ENCODE measurements at regions of chr20 and their contacts with region 1.

Region 1: GRCh38 chr20:3767427-3768341 is at the start of gene ADISSP:
- DNase-seq: peak; percentile 100
- H3K27ac ChIP-seq: peak within 1 kb of the TSS; percentile 90
- CTCF ChIP-seq: no peak

Region 2: DNA sequence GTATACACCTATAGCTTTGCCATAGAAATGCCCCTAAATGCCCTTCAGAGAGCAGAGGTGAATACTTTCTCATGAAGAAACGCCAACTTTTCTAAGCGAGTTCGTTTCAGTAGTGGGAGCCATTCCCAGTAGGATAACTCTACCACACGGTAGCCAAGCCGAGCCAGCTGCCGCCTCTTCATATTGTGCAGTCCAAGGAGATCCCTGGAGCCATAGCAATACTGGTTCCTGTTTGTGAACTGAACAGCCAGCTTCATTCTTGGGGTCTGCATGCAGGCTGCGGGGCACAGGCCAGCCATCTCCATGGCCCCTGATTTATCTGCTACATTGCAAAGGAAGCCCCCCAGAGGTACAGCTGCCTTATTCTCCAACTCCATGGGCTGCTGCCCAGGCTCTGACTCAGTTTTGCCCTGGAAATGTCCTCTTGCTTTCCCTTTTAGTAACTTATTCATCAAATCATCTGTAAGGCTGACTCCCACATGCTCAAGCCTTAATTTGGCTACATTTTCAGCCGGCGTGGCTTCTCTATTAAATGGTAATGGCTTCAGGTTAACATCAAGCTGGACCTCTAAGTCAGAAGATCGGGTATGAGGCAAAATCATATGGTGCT is 620.8 kb before region 1 on chr20:
- CTCF ChIA-PET with region 1: no interaction called
- POLR2A ChIA-PET with region 1: no interaction called
- DNase-seq: no peak
- H3K27ac ChIP-seq: no peak overlapping the region
- CTCF ChIP-seq: no peak

Region 3: GRCh38 chr20:3663031-3663701 is 104.5 kb before region 1 on chr20 and contains the start of gene GFRA4:
- CTCF ChIA-PET with region 1: no interaction called
- POLR2A ChIA-PET with region 1: interaction called, 13 read pairs
- DNase-seq: no peak
- H3K27ac ChIP-seq: no peak within 1 kb of the TSS
- CTCF ChIP-seq: no peak

Region 4: DNA sequence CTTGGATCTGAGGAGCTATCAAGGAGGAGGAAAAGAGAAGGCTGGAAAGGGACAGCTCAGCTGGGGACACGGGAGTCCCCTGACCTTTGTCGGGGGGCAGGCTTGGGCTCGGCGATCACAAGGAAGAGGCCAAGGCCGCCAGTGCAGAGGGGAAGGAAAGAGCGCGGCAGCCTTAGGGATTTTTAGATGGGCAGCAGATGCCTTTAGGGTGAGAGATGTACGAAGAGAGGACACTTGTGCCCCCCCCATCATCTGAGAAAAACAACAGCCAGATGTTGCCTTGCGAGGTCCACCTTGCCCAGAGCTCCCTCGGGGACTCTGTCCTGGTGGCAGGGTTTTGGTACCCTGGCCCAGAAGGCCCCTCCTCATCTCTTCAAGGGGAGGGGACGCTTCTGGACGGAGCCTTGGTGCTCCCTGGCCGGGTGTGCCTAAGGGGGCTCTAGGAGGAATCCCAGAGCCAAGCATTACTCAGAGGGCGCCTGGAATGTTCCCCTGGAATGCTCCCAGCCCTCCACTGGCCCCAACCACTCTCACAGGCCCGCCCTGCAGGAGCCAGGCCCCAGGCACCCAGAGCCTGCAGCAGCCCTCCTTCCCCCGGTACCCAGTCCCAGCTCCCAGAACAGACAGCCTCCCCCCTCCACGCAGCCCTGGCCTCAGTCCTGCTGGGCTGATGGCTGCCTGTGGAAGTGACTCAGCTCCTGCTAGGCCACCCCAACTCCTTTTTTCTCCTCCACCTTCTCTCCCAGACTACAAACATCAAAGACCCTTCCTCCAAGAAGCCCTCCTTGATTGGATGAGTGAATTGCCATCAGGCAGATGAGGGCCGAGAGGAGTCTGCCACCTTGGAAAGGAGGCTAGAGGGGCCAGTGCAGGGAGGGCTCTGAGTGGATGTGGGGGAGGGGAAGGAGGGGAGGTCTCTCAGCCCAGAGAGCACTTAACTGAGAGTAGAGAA is 87.7 kb before region 1 on chr20:
- CTCF ChIA-PET with region 1: interaction called, 10 read pairs
- POLR2A ChIA-PET with region 1: no interaction called
- DNase-seq: no peak
- H3K27ac ChIP-seq: peak overlapping the region; percentile 14; the same call in 1 of the 2 replicates
- CTCF ChIP-seq: no peak

Region 5: DNA sequence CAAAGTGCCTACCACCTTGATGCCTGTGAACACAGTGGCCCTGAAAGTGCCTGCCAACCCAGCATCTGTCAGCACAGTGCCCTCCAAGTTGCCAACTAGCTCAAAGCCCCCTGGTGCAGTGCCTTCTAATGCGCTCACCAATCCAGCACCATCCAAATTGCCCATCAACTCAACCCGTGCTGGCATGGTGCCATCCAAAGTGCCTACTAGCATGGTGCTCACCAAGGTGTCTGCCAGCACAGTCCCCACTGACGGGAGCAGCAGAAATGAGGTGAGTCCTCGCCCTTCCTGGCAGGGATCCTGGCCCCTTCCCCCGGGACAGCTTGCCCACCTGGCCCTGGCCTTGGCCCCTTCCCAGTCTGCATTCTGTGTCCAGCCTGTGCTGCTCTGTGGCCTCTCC is 96.8 kb after region 1 on chr20:
- CTCF ChIA-PET with region 1: no interaction called
- POLR2A ChIA-PET with region 1: no interaction called
- DNase-seq: no peak
- H3K27ac ChIP-seq: peak overlapping the region; percentile 54
- CTCF ChIP-seq: no peak

Region 6: DNA sequence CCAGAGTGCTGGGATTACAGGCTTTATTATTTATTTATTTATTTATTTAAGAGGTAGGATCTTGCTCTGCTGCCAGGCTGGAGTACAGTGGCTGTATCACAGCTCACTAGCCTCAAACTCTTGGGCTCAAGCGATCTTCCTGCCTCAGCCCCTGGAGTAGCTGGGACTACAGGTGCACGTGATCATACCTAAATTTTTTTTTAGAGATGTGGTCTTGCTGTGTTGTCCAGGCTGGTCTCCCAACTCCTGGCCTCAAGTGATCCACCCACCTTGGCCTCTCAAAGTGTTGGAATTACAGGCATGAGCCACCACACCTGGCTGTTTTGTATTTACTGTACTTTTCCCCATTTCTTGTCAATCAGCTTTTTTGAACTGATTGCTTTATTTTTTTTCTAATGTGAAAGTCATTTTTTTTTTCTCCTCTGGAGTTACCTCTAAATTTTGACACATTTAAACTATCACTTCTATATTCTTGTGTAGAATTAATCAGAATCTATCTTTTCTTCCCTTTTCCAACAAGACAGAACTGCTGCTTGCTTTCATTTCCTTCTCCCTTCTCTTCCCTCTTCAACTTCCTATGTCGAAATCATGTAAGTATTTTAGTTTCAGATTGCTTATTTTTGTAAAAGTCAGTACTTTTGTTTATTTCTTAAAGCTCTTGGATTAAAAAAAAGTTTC is 133.5 kb after region 1 on chr20:
- CTCF ChIA-PET with region 1: no interaction called
- POLR2A ChIA-PET with region 1: no interaction called
- DNase-seq: no peak
- H3K27ac ChIP-seq: peak overlapping the region; percentile 49
- CTCF ChIP-seq: no peak

Measured in RWPE1 (cell line).